ENCODE measurements at regions of chr12 and their contacts with region 1.

Region 1: GRCh38 chr12:59619461-59620240 is 23.8 kb downstream of the SLC16A7 start:
- DNase-seq: no peak
- ATAC-seq: no peak

Region 2: DNA sequence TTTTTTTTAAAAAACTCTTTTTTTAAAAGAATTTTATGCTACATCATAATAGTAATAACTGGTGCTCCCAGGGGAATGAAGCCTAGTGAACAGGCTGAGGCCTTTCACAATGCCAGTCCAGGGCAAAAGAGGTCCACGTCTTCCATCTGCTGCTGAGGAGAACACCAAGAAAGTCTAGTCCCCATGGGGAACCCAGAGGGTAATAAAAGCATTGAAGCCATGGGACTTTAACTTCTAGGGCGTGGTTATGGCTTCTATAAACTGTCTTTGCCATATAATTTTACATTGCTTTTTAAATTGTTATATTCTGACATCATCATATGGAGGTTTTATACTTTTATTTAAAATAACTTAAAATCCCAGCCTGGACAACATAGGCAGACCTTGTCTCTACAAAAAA is 40.5 kb after region 1 on chr12:
- intact Hi-C with region 1: loop called in 1 of 2 experiments (anchors 5 kb)
- DNase-seq: no peak
- ATAC-seq: peak in 1 of 2 donors; percentile 43

Region 3: GRCh38 chr12:59736822-59737221 is 117.2 kb after region 1 on chr12:
- intact Hi-C with region 1: no loop called
- DNase-seq: no peak
- ATAC-seq: peak in 1 of 2 donors; percentile 77

Measured in left cardiac atrium (tissue), 4 donors.